B cell (primary cell): ENCODE measurements at regions of chr7 and their contacts with region 1.

Region 1: DNA sequence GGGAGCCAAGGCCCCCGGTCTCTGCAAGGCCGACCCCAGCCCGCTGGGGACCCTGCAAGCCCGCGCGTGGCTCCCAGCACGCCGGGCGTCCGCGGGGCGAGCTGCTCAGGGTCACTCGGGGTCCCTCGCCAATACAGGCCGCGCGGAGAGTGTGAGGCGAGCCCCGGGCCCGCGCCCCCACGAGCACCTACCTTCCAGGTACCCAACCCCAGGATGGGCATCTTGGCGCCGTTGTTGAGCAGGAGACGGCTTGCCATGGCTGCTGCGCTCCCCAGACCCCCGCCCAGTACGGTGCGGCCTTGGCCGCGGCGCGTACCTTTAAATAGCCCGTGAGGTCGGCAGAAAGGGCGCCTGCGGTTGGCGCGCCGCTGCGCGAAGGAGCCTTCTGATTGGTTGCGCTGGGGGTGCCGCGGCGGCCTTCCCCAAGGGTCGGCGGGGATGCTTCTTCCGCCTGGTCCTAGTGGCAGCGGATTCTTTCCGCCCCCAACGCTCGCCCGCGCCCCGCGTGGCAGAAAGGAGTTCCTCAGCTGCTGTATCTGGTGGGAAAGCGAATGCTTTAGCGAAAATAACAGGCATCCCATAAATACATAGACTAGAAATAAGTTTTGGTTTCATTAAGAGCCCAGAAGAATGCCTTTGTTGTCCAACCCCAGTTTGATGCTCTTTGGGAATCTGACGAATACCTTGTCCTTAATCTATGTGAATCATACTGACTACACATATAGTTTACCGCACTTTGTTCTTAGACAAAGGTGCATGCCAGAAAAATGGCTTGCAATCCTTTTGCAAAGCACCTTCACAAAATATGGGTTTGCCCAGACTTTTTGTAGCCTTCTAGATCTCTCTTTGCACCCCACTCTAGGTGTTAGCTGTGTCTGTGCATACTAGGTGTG is at the start of gene AKR1B1:
- DNase-seq: peak; percentile 94
- ATAC-seq: peak; percentile 89
- H3K4me3 ChIP-seq: peak within 1 kb of the TSS; percentile 42 to 90 (median 84)
- H3K4me3 Mint-ChIP-seq: peak within 1 kb of the TSS; percentile 92
- H3K27ac ChIP-seq: peak within 1 kb of the TSS; percentile 53 to 79
- H3K27ac Mint-ChIP-seq: peak within 1 kb of the TSS; percentile 91
- H3K4me1 ChIP-seq: peaks cover 22 to 24% of the 10 kb centered on the region in 2 donors
- H3K4me1 Mint-ChIP-seq: peaks cover 47% of the 10 kb centered on the region
- H3K27me3 ChIP-seq: peaks cover 0 to 3% (median 0%) of the 10 kb centered on the region in 4 experiments
- H3K27me3 Mint-ChIP-seq: no peaks in the 10 kb centered on the region
- CTCF ChIP-seq: peak; percentile 77
- total RNA-seq, gene AKR1B1: 89.6 and 94.7 TPM in 2 replicates

Region 2: DNA sequence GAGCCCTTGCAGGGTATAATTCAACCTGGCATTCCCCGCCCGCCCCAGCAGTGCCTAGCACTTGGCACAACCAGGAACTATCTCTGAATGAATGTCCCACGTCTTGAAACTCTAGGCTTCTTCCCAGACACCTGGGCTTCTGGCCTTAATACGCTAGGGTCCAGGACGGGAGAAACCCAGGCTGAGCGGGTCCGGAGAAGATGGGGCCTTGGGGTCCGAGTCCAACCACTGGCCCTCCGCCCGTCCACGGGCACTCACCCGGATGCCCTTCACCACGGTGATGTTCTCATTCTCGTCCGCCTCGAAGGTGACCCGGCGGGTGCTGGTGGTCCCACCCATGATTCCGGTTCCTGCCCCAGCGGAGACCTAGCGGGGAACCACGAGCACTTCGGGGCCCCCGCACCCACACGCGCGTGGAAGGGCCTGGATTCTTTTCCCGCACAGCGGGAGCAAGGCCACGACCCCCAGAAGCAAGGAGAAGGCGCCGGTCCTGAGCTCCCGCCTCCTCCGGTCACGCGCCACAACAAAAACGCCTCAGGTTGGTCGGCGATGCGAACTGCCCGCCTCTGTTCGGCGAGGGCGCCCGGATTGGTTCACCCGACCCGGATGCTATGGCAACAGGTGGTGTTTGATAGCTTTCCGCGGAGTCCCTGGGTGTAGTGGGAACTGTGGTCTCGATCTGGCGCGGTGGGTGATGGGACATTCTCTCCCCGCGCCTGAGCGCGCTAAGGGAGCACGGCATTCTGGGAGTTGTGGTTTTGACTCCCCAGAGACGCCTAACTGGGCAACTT is 1377.3 kb before region 1 on chr7 and contains the start of gene CHCHD3:
- CTCF ChIA-PET with region 1: no interaction called
- POLR2A ChIA-PET with region 1: no interaction called
- intact Hi-C with region 1: loop called (anchors 2 kb)
- DNase-seq: peak; percentile 97
- ATAC-seq: peak; percentile 99
- H3K4me3 ChIP-seq: peak within 1 kb of the TSS; percentile 71 to 96 (median 91)
- H3K4me3 Mint-ChIP-seq: peak within 1 kb of the TSS; percentile 93
- H3K27ac ChIP-seq: peak within 1 kb of the TSS; percentile 79 to 98
- H3K27ac Mint-ChIP-seq: peak within 1 kb of the TSS; percentile 95
- H3K4me1 ChIP-seq: peaks cover 11% of the 10 kb centered on the region in 2 donors
- H3K4me1 Mint-ChIP-seq: peaks cover 24% of the 10 kb centered on the region
- H3K27me3 ChIP-seq: no peaks in the 10 kb centered on the region
- H3K27me3 Mint-ChIP-seq: peaks cover 6% of the 10 kb centered on the region
- CTCF ChIP-seq: no peak
- total RNA-seq, gene CHCHD3: 38.4 and 40.8 TPM in 2 replicates

Region 3: GRCh38 chr7:134316539-134317344 is 142.3 kb before region 1 on chr7 and contains the start of gene SLC35B4:
- CTCF ChIA-PET with region 1: no interaction called
- POLR2A ChIA-PET with region 1: interaction called, 4 read pairs
- intact Hi-C with region 1: loop called (anchors 1 kb)
- DNase-seq: peak; percentile 94
- ATAC-seq: peak; percentile 98
- H3K4me3 ChIP-seq: peak within 1 kb of the TSS; percentile 52 to 95 (median 84)
- H3K4me3 Mint-ChIP-seq: peak within 1 kb of the TSS; percentile 95
- H3K27ac ChIP-seq: peak within 1 kb of the TSS; percentile 46 to 68
- H3K27ac Mint-ChIP-seq: peak within 1 kb of the TSS; percentile 85
- H3K4me1 ChIP-seq: peaks cover 10 to 14% of the 10 kb centered on the region in 2 donors
- H3K4me1 Mint-ChIP-seq: peaks cover 18% of the 10 kb centered on the region
- H3K27me3 ChIP-seq: no peaks in the 10 kb centered on the region
- H3K27me3 Mint-ChIP-seq: no peaks in the 10 kb centered on the region
- CTCF ChIP-seq: peak; percentile 41
- total RNA-seq, gene SLC35B4: 8.0 and 14.8 TPM in 2 replicates

Region 4: GRCh38 chr7:134420424-134421125 is 38.5 kb before region 1 on chr7:
- CTCF ChIA-PET with region 1: no interaction called
- POLR2A ChIA-PET with region 1: no interaction called
- intact Hi-C with region 1: no loop called
- DNase-seq: no peak
- ATAC-seq: no peak
- H3K4me3 ChIP-seq: no peak overlapping the region
- H3K4me3 Mint-ChIP-seq: no peak overlapping the region
- H3K27ac ChIP-seq: no peak overlapping the region
- H3K27ac Mint-ChIP-seq: no peak overlapping the region
- H3K4me1 ChIP-seq: no peaks in the 10 kb centered on the region
- H3K4me1 Mint-ChIP-seq: no peaks in the 10 kb centered on the region
- H3K27me3 ChIP-seq: peaks cover 0 to 6% (median 2%) of the 10 kb centered on the region in 4 experiments
- H3K27me3 Mint-ChIP-seq: peaks cover 11% of the 10 kb centered on the region
- CTCF ChIP-seq: no peak

Region 5: DNA sequence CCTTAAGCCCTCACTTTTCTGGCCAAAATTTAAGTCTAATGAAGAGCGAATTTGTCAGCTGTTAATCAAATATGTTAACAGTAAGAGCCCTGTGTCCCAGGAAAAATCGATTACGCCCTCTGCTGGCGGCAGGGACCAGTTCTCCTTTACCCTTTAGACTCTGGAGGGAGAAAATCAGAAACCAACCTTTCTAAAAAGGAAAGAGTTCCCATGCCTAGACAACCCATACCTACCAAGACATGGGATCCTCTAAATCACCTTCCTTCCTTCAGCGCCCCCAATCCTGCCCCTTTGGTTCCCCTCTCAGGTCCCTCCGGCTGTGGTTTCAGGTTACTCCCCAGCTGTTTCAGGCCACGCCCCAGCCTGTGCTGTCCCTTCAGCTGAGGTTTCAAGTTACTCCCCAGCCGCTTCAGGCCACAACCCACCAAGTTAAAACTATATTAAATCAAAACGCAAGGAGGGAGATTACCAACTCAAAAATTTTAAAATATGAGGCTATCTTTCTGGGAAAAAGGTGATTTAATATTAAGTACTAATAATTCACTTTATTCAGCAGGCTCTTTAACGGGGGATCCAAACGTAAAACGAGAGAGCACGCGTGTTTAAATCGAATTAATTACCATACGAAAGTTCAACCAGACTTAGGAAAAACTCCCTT is 88.5 kb after region 1 on chr7:
- CTCF ChIA-PET with region 1: interaction called, 10 read pairs
- POLR2A ChIA-PET with region 1: no interaction called
- intact Hi-C with region 1: no loop called
- DNase-seq: peak; percentile 71
- ATAC-seq: peak; percentile 54
- H3K4me3 ChIP-seq: no peak overlapping the region
- H3K4me3 Mint-ChIP-seq: peak overlapping the region; percentile 49
- H3K27ac ChIP-seq: no peak overlapping the region
- H3K27ac Mint-ChIP-seq: no peak overlapping the region
- H3K4me1 ChIP-seq: peaks cover 3 to 5% of the 10 kb centered on the region in 2 donors
- H3K4me1 Mint-ChIP-seq: peaks cover 4% of the 10 kb centered on the region
- H3K27me3 ChIP-seq: no peaks in the 10 kb centered on the region
- H3K27me3 Mint-ChIP-seq: peaks cover 48% of the 10 kb centered on the region
- CTCF ChIP-seq: peak; percentile 91

Region 6: GRCh38 chr7:135147899-135148721 is 689.1 kb after region 1 on chr7 and contains the start of gene TMEM140:
- CTCF ChIA-PET with region 1: no interaction called
- POLR2A ChIA-PET with region 1: no interaction called
- intact Hi-C with region 1: loop called (anchors 5 kb)
- DNase-seq: peak; percentile 87
- ATAC-seq: peak; percentile 78
- H3K4me3 ChIP-seq: peak within 1 kb of the TSS; percentile 51 to 98 (median 72)
- H3K4me3 Mint-ChIP-seq: peak within 1 kb of the TSS; percentile 91
- H3K27ac ChIP-seq: peak within 1 kb of the TSS; percentile 86 to 90
- H3K27ac Mint-ChIP-seq: peak within 1 kb of the TSS; percentile 94
- H3K4me1 ChIP-seq: peaks cover 42 to 52% of the 10 kb centered on the region in 2 donors
- H3K4me1 Mint-ChIP-seq: peaks cover 62% of the 10 kb centered on the region
- H3K27me3 ChIP-seq: no peaks in the 10 kb centered on the region
- H3K27me3 Mint-ChIP-seq: no peaks in the 10 kb centered on the region
- CTCF ChIP-seq: no peak
- total RNA-seq, gene TMEM140: 79.1 and 84.9 TPM in 2 replicates

Region 7: DNA sequence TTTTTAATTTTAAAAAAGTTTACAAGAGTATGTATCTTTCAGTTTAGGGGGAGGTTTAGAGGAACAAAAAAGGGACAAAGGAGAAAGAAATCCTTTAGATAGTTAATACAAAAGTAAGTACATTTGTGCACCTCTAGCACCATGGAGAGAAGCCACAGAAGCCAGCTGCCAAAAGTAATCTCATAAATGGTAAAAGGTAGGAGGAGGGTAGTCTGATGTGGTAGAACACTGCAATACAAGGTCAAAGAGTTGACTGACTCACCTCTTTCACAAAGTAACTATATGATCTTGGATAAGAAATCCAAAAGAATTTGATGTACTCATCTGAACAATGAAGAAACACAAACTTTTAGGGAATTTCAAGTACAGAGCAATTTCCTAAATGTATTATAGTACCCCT is 982.7 kb after region 1 on chr7:
- CTCF ChIA-PET with region 1: no interaction called
- POLR2A ChIA-PET with region 1: no interaction called
- intact Hi-C with region 1: no loop called
- DNase-seq: no peak
- ATAC-seq: no peak
- H3K4me3 ChIP-seq: no peak overlapping the region
- H3K4me3 Mint-ChIP-seq: no peak overlapping the region
- H3K27ac ChIP-seq: no peak overlapping the region
- H3K27ac Mint-ChIP-seq: no peak overlapping the region
- H3K4me1 ChIP-seq: no peaks in the 10 kb centered on the region
- H3K4me1 Mint-ChIP-seq: peaks cover 10% of the 10 kb centered on the region
- H3K27me3 ChIP-seq: no peaks in the 10 kb centered on the region
- H3K27me3 Mint-ChIP-seq: no peaks in the 10 kb centered on the region
- CTCF ChIP-seq: no peak

Region 8: GRCh38 chr7:135509903-135510602 is 1051.0 kb after region 1 on chr7 and contains the start of gene CNOT4:
- CTCF ChIA-PET with region 1: no interaction called
- POLR2A ChIA-PET with region 1: no interaction called
- intact Hi-C with region 1: loop called (anchors 2 kb)
- DNase-seq: peak; percentile 97
- ATAC-seq: peak; percentile 95
- H3K4me3 ChIP-seq: peak within 1 kb of the TSS; percentile 79 to 96 (median 89)
- H3K4me3 Mint-ChIP-seq: no peak within 1 kb of the TSS
- H3K27ac ChIP-seq: peak within 1 kb of the TSS; percentile 92 to 96
- H3K27ac Mint-ChIP-seq: no peak within 1 kb of the TSS
- H3K4me1 ChIP-seq: peaks cover 17 to 24% of the 10 kb centered on the region in 2 donors
- H3K4me1 Mint-ChIP-seq: peaks cover 10% of the 10 kb centered on the region
- H3K27me3 ChIP-seq: no peaks in the 10 kb centered on the region
- H3K27me3 Mint-ChIP-seq: no peaks in the 10 kb centered on the region
- CTCF ChIP-seq: no peak
- total RNA-seq, gene CNOT4: 52.1 and 55.1 TPM in 2 replicates

Region 9: DNA sequence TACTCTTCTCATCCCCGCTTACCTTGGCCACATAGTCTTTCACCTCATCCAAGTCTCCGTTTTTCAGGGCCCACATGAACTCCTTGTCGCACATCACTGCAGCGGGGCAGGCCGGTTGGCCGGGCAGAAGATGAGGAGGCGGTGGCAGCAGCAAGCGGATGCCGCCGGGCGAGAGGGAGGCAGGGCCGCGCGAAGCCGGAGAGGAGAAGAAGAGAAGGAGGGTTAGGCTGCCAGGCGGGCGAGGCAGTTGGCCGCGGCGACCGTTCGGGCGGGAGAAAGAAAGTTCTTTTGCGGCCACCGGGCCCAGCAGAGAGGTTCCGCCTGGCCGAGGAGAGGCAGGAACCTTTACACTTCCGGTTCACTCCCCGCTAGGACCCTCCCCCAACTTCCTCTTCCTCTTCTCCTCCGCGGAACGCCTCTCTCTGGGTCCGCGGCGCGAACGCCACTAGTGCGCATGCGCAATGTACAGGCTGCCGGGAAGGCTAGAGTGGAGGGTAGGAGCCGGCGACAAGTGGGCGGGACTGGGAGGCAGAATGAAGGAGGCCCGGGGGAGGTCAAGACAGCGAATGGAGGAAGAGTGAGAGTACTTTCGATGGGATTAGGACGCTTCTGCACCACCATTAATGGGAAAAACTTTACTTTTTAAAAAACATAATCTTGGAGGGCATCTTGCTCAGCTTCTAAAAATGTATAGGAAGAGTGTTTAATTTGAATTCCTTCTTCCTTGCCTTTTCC is 1518.1 kb after region 1 on chr7 and contains the start of gene MTPN:
- CTCF ChIA-PET with region 1: no interaction called
- POLR2A ChIA-PET with region 1: no interaction called
- intact Hi-C with region 1: loop called (anchors 2 kb)
- DNase-seq: peak; percentile 97
- ATAC-seq: peak; percentile 75
- H3K4me3 ChIP-seq: peak within 1 kb of the TSS; percentile 75 to 91 (median 89)
- H3K4me3 Mint-ChIP-seq: peak within 1 kb of the TSS; percentile 89
- H3K27ac ChIP-seq: peak within 1 kb of the TSS; percentile 92 to 94
- H3K27ac Mint-ChIP-seq: peak within 1 kb of the TSS; percentile 95
- H3K4me1 ChIP-seq: peaks cover 64 to 71% of the 10 kb centered on the region in 2 donors
- H3K4me1 Mint-ChIP-seq: peaks cover 86% of the 10 kb centered on the region
- H3K27me3 ChIP-seq: no peaks in the 10 kb centered on the region
- H3K27me3 Mint-ChIP-seq: no peaks in the 10 kb centered on the region
- CTCF ChIP-seq: no peak
- total RNA-seq, gene MTPN: 114 and 115 TPM in 2 replicates